HCT116 (cell line): ENCODE measurements at regions of chr13 and their contacts with region 1.

Region 1: GRCh38 chr13:81872581-81872980 is 1531.7 kb upstream of the SPRY2 start:
- DNase-seq: peak; percentile 12
- ATAC-seq: peak; percentile 60
- H3K4me3 ChIP-seq: no peak overlapping the region
- H3K27ac ChIP-seq: no peak overlapping the region
- H3K4me1 ChIP-seq: 0 out of 4 replicates have a peak, but pooled peaks cover 0 to 5% of the 10 kb centered on the region in 2 experiments
- H3K27me3 ChIP-seq: no peaks in the 10 kb centered on the region
- CTCF ChIP-seq: peak; percentile 17 to 44 (median 34); a peak in 5 of 6 replicates
- POLR2A ChIP-seq: no peak
- RAD21 ChIP-seq: peak; percentile 53

Region 2: DNA sequence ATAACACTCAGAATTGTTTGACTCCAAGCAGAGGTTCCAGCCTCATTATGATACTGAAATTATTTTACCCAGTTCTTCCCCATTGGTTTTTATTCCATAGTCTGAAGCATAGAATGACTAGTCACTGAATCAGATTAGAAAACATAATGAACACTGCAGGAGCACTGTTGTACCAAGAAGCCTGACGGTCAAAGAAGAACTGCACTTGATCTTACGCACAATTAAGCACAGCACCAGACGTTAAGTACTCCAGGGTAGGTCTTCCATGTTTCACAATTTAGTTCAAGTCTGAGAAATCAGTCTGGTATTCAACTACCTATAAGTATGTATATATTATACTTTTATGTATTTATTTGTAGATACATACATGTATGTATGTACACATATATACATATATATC is 558.1 kb before region 1 on chr13:
- CTCF ChIA-PET with region 1: no interaction called
- POLR2A ChIA-PET with region 1: no interaction called
- RAD21 ChIA-PET with region 1: no interaction called
- intact Hi-C with region 1: no loop called
- DNase-seq: no peak
- ATAC-seq: no peak
- H3K4me3 ChIP-seq: no peak overlapping the region
- H3K27ac ChIP-seq: no peak overlapping the region
- H3K4me1 ChIP-seq: no peaks in the 10 kb centered on the region
- H3K27me3 ChIP-seq: no peaks in the 10 kb centered on the region
- CTCF ChIP-seq: no peak
- POLR2A ChIP-seq: no peak
- RAD21 ChIP-seq: no peak

Region 3: DNA sequence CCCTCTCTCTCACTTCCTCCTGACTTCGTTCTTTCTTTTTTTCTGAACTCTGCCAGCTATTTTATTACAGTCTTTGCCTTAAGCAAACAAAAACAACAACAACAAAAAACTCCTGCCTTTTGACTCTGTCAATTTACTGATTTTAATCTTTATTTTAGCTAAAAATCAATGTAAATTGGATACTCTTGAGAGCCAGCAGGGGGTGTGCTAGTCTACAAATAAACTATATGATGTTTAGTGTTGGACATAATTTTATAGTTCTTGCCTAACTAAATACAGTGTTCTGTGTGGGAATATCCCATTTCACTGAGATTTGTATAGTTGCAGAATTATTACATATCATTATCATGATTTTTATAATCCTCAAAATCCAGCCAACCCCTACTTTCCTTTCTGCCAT is 331.8 kb before region 1 on chr13:
- CTCF ChIA-PET with region 1: interaction called, 6 read pairs
- POLR2A ChIA-PET with region 1: no interaction called
- RAD21 ChIA-PET with region 1: no interaction called
- intact Hi-C with region 1: loop called (anchors 5 kb)
- DNase-seq: no peak
- ATAC-seq: no peak
- H3K4me3 ChIP-seq: no peak overlapping the region
- H3K27ac ChIP-seq: no peak overlapping the region
- H3K4me1 ChIP-seq: no peaks in the 10 kb centered on the region
- H3K27me3 ChIP-seq: no peaks in the 10 kb centered on the region
- CTCF ChIP-seq: peak in 1 of 3 experiments; percentile 47; a peak in 3 of 6 replicates
- POLR2A ChIP-seq: no peak
- RAD21 ChIP-seq: peak; percentile 30; the same call in 1 of the 2 replicates

Region 4: DNA sequence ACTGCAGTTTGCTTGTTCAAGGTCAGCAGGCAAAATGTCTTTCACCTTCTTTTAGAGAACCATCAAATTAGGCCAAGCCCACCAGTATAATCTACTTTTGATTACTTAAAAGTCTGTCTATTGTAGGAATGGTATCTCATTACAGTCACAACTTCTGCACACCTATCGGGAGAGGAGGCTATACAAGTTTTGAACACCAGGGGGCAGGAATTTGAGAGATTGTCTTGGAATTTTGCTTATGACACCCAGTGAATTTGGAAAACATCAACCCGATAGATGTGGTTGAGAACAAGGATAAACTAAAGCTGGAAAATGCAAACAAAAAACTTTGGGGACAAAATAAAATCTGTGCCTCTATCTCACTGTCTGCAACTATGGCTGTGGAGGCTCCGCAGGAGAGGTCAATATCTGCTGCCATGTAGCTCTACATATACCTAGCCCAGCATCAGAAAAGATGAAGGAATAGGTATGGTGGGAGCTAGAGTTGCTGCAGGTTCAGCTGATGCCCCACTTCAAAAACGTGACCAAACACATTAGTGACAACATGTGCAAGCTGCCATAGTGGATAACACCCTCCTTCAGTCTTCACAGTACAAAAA is 232.5 kb before region 1 on chr13:
- CTCF ChIA-PET with region 1: interaction called, 11 read pairs
- POLR2A ChIA-PET with region 1: no interaction called
- RAD21 ChIA-PET with region 1: no interaction called
- intact Hi-C with region 1: loop called (anchors 2 kb)
- DNase-seq: peak; percentile 0
- ATAC-seq: peak; percentile 57
- H3K4me3 ChIP-seq: no peak overlapping the region
- H3K27ac ChIP-seq: no peak overlapping the region
- H3K4me1 ChIP-seq: no peaks in the 10 kb centered on the region
- H3K27me3 ChIP-seq: no peaks in the 10 kb centered on the region
- CTCF ChIP-seq: peak; percentile 17 to 69 (median 62); a peak in 4 of 6 replicates
- POLR2A ChIP-seq: no peak
- RAD21 ChIP-seq: peak; percentile 26; the same call in 1 of the 2 replicates